Dendritic cell treated with granulocyte-macrophage colony-stimulating factor and Interleukin-4, amounts not matched to agents 40 ng/mL and 50 ng/mL, for 4 days (primary cell): ENCODE measurements at regions of chr4 and their contacts with region 1.

Region 1: DNA sequence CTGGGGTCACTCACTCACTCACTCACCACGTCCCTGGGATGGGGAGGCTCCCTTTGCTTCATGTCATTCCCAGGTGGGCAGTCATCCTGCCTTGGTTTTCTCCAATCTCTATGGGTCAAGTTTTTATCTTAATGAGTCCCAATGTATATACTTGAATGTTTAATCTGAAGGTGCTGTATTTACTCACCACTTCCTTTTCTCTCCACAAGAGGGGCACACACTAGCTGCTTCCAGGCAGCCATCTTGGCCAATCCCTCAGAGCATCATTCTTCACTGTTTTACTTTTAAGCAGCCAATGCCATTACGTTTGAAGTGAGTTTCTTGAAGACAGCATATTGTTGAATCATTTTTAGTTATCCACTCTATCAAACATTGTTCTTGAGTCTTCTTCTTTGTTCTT is 153.4 kb upstream of the ARSJ start:
- H3K4me3 Mint-ChIP-seq: no peak overlapping the region
- H3K27ac Mint-ChIP-seq: no peak overlapping the region
- H3K4me1 Mint-ChIP-seq: no peaks in the 10 kb centered on the region
- H3K27me3 Mint-ChIP-seq: no peaks in the 10 kb centered on the region

Region 2: GRCh38 chr4:114005569-114006442 is 127.0 kb before region 1 on chr4:
- intact Hi-C with region 1: no loop called
- H3K4me3 Mint-ChIP-seq: no peak overlapping the region
- H3K27ac Mint-ChIP-seq: no peak overlapping the region
- H3K4me1 Mint-ChIP-seq: no peaks in the 10 kb centered on the region
- H3K27me3 Mint-ChIP-seq: peaks cover 5% of the 10 kb centered on the region

Region 3: DNA sequence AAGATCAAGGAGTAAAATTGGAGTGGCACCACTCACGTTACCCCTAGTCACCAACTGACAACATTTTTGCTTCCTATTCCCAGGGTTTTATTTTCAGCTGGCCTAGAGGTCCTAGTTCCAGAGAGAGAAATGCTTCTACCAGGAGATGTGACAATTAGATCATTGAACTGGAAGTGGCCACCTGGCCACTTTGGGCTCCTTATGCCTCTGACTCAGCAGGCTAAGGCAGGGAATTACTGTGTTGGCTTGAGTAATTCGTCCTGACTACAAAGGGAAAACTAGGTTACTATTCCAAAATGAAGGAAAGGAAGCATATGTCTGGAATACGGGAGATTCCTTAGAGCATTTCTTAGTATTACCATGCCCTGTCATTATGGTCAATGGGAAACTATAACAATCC is 1812.2 kb after region 1 on chr4:
- intact Hi-C with region 1: loop called (anchors 5 kb)
- H3K4me3 Mint-ChIP-seq: no peak overlapping the region
- H3K27ac Mint-ChIP-seq: no peak overlapping the region
- H3K4me1 Mint-ChIP-seq: no peaks in the 10 kb centered on the region
- H3K27me3 Mint-ChIP-seq: no peaks in the 10 kb centered on the region